Caco-2 (cell line): ENCODE measurements at regions of chr19 and their contacts with region 1.

Region 1: GRCh38 chr19:16509141-16510061 is 13.2 kb downstream of the C19orf44 start:
- DNase-seq: no peak
- H3K4me3 ChIP-seq: no peak overlapping the region
- H3K4me3 Mint-ChIP-seq: no peak overlapping the region
- H3K27ac Mint-ChIP-seq: no peak overlapping the region
- H3K4me1 ChIP-seq: no peaks in the 10 kb centered on the region
- H3K4me1 Mint-ChIP-seq: no peaks in the 10 kb centered on the region
- H3K27me3 ChIP-seq: no peaks in the 10 kb centered on the region
- H3K27me3 Mint-ChIP-seq: no peaks in the 10 kb centered on the region
- CTCF ChIP-seq: no peak

Region 2: GRCh38 chr19:16233836-16234551 is 275.4 kb before region 1 on chr19:
- CTCF ChIA-PET with region 1: interaction called, 13 read pairs
- POLR2A ChIA-PET with region 1: no interaction called
- intact Hi-C with region 1: no loop called
- DNase-seq: no peak
- H3K4me3 ChIP-seq: no peak overlapping the region
- H3K4me3 Mint-ChIP-seq: no peak overlapping the region
- H3K27ac Mint-ChIP-seq: no peak overlapping the region
- H3K4me1 ChIP-seq: no peaks in the 10 kb centered on the region
- H3K4me1 Mint-ChIP-seq: no peaks in the 10 kb centered on the region
- H3K27me3 ChIP-seq: no peaks in the 10 kb centered on the region
- H3K27me3 Mint-ChIP-seq: no peaks in the 10 kb centered on the region
- CTCF ChIP-seq: no peak